Spleen (tissue), 13 donors: ENCODE measurements at regions of chr12 and their contacts with region 1.

Region 1: DNA sequence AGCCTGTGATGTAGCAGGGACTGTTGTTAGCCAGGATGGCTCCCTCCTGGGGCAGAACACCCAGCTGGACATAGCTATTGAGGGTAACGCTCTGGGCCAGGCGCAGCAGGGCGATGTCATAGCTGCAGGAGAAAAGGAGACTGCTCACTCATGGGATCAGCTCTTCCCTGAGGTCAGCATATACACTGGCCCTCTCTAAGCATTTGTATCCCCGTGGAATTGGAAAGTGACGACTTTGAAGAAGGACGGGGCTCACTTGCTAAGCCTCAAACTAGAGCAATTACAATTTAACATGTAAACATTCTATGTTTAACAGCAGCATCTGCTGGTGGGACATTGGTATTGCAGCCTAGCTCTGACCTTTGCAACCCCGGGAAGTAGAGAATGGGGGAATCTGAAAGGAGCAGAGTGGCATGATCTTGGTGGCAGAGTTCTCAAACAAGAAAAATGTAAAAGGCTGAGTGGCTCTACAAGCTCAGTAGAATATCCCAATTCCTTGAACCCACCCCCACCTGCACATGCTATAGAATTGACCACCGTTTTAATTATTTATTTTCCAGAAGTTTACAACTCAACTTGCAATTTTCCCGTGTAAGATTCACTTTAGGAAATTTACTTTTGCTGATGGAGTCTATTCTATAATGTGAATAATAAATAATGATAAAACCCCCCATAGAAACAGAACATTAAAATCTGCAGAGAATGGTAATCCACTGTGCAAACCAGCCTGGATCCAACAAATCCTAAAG is 5.0 kb downstream of the CELA1 start:
- DNase-seq: no peak
- H3K4me3 ChIP-seq: peak overlapping the region in 2 of 8 donors; percentile 19 to 48
- H3K27ac ChIP-seq: peak overlapping the region in 3 of 8 donors; percentile 35 to 67 (median 53)
- H3K4me1 ChIP-seq: peaks cover 9 to 42% (median 16%) of the 10 kb centered on the region in 6 donors
- H3K27me3 ChIP-seq: no peaks in the 10 kb centered on the region
- CTCF ChIP-seq: peak; percentile 89 to 98 (median 97)
- POLR2A ChIP-seq: no peak

Region 2: DNA sequence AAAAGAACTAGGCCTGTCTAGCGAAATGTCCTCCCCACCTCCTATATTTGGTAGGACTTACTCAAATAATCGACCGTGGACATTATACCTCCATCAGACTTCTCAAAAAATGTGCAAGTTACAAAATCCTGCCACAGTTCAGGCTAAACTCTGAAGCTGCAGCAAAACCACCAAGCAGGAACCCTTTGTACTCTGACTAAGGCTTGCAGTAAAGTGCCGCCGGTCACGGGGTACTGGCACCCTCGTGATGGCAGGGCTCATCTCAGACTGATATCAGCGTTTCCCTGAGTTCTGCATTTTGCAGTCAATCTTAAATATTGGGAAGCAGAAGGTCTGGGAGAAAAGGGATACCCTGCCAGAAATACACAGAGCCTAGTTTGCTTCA is 332.4 kb before region 1 on chr12:
- intact Hi-C with region 1: no loop called
- DNase-seq: peak; percentile 88
- H3K4me3 ChIP-seq: peak overlapping the region in 3 of 8 donors; percentile 2 to 34 (median 4)
- H3K27ac ChIP-seq: peak overlapping the region in 5 of 8 donors; percentile 35 to 76 (median 67)
- H3K4me1 ChIP-seq: peaks cover 0 to 55% (median 27%) of the 10 kb centered on the region in 6 donors
- H3K27me3 ChIP-seq: no peaks in the 10 kb centered on the region
- CTCF ChIP-seq: no peak
- POLR2A ChIP-seq: no peak

Region 3: DNA sequence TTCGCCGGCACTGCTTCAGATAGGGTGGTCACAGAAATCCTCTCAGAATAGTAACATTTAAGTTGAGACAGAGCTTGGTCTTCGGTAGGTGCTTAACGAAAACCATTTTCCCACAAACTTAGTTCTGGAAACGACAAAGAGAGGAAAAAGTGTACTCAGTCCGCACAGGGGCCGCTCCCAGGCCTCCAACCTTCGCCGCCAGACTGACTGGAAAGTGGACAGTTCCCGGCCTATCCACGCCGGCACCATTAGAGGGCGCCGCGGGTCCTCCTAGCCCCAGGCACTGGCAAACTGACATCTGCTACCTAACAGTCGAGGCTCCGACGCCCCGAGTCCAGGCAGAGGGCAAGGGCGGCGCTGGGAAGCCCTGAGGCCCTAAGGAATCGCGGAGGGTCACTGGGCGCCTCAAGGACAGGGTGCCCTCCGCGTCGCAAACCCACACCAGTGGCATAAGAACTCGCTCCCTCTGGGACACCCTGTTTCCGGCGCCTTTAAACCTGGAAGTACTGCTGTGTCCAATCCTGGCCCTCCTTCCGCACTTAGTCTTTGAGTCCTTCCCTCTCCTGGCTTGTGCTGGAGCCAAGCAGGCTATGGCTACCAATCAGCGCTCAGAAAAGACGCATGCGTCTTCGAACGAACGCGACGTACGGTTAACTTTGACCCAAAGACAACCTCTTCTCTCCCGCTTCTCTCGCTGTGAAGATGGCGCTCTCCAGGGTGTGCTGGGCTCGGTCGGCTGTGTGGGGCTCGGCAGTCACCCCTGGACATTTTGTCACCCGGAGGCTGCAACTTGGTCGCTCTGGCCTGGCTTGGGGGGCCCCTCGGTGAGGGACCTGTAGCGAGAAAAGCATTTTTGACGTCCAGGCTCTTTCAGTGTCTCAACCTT is 293.5 kb before region 1 on chr12 and contains the start of gene LETMD1:
- intact Hi-C with region 1: loop called (anchors 5 kb)
- DNase-seq: peak; percentile 97
- H3K4me3 ChIP-seq: peak within 1 kb of the TSS; percentile 64 to 92 (median 79)
- H3K27ac ChIP-seq: peak within 1 kb of the TSS; percentile 91 to 99 (median 96)
- H3K4me1 ChIP-seq: peaks cover 18 to 50% (median 27%) of the 10 kb centered on the region in 6 donors
- H3K27me3 ChIP-seq: no peaks in the 10 kb centered on the region
- CTCF ChIP-seq: peak; percentile 68 to 96 (median 91)
- POLR2A ChIP-seq: peak; percentile 33 to 54 (median 43)
- total RNA-seq, gene LETMD1: 51.4 to 85.2 (median 66.3) TPM

Region 4: GRCh38 chr12:51262758-51263177 is 78.7 kb before region 1 on chr12:
- intact Hi-C with region 1: loop called (anchors 5 kb)
- DNase-seq: peak; percentile 82
- H3K4me3 ChIP-seq: no peak overlapping the region
- H3K27ac ChIP-seq: peak overlapping the region in 6 of 8 donors; percentile 39 to 65 (median 48)
- H3K4me1 ChIP-seq: peaks cover 0 to 30% (median 13%) of the 10 kb centered on the region in 6 donors
- H3K27me3 ChIP-seq: no peaks in the 10 kb centered on the region
- CTCF ChIP-seq: peak in 9 of 11 experiments; percentile 6 to 56 (median 39)
- POLR2A ChIP-seq: no peak

Region 5: DNA sequence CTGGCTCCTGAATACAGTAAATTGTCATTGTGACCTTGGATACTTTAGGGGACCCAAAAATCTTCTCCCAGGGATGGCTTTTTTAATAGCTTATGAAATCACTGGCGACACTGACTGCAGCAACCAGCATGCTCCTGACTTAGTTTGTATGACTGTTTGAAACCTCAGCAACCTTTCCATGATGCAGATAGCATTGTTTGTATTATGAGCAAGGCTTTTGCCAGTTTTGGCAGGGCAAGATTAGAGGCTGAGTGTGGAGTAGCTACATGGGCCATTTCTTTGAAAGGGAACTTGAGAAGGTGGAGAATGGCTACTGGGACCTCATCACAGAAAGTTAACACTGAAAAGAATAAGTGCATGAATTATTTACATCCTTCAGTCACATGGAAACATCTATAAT is 134.1 kb after region 1 on chr12:
- intact Hi-C with region 1: no loop called
- DNase-seq: no peak
- H3K4me3 ChIP-seq: no peak overlapping the region
- H3K27ac ChIP-seq: no peak overlapping the region
- H3K4me1 ChIP-seq: peaks cover 0 to 13% (median 0%) of the 10 kb centered on the region in 6 donors
- H3K27me3 ChIP-seq: peaks cover 0 to 15% (median 0%) of the 10 kb centered on the region in 7 donors
- CTCF ChIP-seq: no peak
- POLR2A ChIP-seq: no peak